ENCODE measurements at regions of chr6 and their contacts with region 1.

Region 1: GRCh38 chr6:160455541-160456213 is 107.5 kb downstream of the SLC22A3 start:
- DNase-seq: peak; percentile 58 to 76 (median 76)
- ATAC-seq: peak; percentile 92
- H3K4me3 ChIP-seq: no peak overlapping the region
- H3K4me1 ChIP-seq: peaks cover 6% of the 10 kb centered on the region
- CTCF ChIP-seq: peak; percentile 85

Region 2: GRCh38 chr6:159862103-159862502 is 593.6 kb before region 1 on chr6:
- intact Hi-C with region 1: loop called in 1 of 2 experiments (anchors 10 kb)
- DNase-seq: no peak
- ATAC-seq: no peak
- H3K4me3 ChIP-seq: no peak overlapping the region
- H3K4me1 ChIP-seq: no peaks in the 10 kb centered on the region
- CTCF ChIP-seq: no peak

Region 3: GRCh38 chr6:160088069-160088783 is 367.5 kb before region 1 on chr6:
- intact Hi-C with region 1: loop called (anchors 10 kb)
- DNase-seq: peak in 2 of 3 donors; percentile 77 to 87
- ATAC-seq: peak; percentile 62
- H3K4me3 ChIP-seq: no peak overlapping the region
- H3K4me1 ChIP-seq: peaks cover 6% of the 10 kb centered on the region
- CTCF ChIP-seq: peak; percentile 48

Region 4: DNA sequence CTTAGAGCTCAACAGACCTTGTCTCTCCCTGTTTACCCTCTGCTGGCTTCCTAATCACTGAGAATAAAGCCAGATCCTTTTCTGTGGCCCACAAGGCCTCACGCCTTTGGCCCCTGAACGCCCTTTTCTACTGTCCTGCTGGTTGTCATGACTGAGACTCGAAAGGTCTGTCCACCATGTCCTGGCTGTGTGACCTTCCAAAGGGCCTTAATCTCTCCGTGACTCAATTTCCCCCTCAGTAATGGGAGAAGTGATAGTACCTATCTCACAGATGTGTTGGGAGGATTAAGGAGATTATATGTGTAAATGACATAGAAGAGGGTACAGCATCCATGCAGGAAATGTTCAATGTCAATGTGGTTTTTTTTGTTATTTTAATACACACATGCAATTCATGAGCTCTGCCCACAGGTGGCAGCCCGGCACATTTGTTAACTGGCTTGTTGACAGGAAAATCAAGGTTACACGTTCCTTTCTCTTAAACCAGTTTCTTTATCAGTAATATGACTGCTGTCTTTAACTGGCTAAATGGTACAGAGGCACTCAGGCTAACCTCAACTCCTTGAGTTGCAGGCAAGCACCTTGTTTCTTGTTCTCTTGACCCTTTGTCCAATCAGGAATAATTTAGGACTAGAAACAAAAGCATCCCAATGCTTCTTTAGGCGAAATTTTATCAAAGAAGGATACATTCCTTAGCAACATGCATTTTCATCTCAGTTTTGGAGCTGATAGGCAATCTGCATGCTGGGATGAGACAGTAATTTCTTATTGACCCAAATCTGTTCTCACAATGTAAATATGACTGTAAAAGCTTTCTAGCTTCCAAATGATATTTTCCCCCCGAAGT is 317.5 kb before region 1 on chr6:
- intact Hi-C with region 1: loop called in 1 of 2 experiments (anchors 5 kb)
- DNase-seq: peak; percentile 50 to 76 (median 74)
- ATAC-seq: peak; percentile 77
- H3K4me3 ChIP-seq: no peak overlapping the region
- H3K4me1 ChIP-seq: peaks cover 3% of the 10 kb centered on the region
- CTCF ChIP-seq: peak; percentile 51

Region 5: DNA sequence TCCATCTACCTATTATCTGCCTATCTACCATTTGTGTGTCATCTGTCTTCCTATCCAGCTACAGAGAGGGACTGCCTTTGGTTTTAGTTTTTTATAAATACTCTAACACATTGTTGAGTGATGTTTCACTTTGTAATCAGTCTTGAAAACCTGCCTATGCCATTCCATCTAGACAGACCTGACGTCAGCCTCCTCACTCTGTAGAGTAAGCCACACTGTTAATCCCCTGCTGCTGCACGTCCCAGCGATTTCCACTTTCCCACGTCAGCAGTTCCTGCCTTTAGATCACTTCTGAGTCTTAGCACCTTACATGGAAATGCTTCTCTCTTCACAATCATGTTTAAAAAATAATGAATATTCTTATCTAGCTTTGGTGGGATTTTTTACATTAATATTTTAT is 301.2 kb after region 1 on chr6:
- intact Hi-C with region 1: no loop called
- DNase-seq: no peak
- ATAC-seq: no peak
- H3K4me3 ChIP-seq: no peak overlapping the region
- H3K4me1 ChIP-seq: no peaks in the 10 kb centered on the region
- CTCF ChIP-seq: no peak